ENCODE measurements at regions of chr1 and their contacts with region 1.

Region 1: GRCh38 chr1:166166695-166167571 is at the start of gene FAM78B:
- DNase-seq: peak; percentile 80 to 86 (median 84)
- ATAC-seq: peak; percentile 94 to 96 (median 96)
- H3K4me3 ChIP-seq: peak within 1 kb of the TSS; percentile 31 to 88 (median 68)
- H3K27ac ChIP-seq: peak within 1 kb of the TSS; percentile 47 to 88 (median 66)
- H3K4me1 ChIP-seq: peaks cover 0 to 28% (median 14%) of the 10 kb centered on the region in 12 donors
- H3K27me3 ChIP-seq: peaks cover 0 to 22% (median 0%) of the 10 kb centered on the region in 9 donors
- CTCF ChIP-seq: peak in 4 of 12 donors; percentile 2 to 34 (median 11)
- POLR2A ChIP-seq: no peak
- total RNA-seq, gene FAM78B: 1.3 to 9.4 (median 2.8) TPM

Region 2: DNA sequence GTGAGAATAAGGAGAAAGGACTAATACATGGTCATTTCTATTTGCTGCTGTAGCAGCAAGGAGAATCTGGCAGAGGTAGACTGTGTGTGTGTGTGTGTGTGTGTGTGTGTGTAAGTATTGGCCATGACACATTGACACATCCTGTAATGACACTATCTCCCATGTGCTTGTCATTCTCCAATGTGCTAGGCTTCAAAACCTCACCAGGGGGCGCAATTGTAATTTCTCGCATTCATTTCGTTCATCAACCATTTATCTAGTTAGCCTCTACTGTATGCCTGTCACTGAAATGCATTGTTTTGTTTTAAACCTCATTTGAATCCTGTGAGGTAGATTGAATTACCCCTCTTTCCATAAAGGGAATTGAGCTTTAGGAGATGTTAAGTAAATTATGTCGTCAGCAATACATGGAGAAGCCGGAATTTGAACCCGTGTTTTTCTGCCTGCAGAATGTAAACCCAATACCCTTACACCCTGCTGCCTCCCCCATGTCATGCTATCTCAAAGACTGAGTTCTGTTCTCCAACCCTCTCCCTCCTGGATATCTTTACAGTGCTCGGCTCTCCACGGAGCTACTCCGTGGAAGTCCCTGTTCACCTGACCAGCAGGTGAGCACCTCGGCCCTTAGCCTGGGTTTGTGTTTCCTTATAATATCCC is 238.7 kb before region 1 on chr1:
- intact Hi-C with region 1: loop called in 9 of 10 experiments (anchors 2 to 10 kb)
- DNase-seq: peak in 1 of 5 donors; percentile 38
- ATAC-seq: peak in 2 of 4 donors; percentile 11 to 47
- H3K4me3 ChIP-seq: no peak overlapping the region
- H3K27ac ChIP-seq: no peak overlapping the region
- H3K4me1 ChIP-seq: no peaks in the 10 kb centered on the region
- H3K27me3 ChIP-seq: peaks cover 0 to 4% (median 0%) of the 10 kb centered on the region in 9 donors
- CTCF ChIP-seq: peak; percentile 39 to 74 (median 62)
- POLR2A ChIP-seq: no peak

Region 3: GRCh38 chr1:165933446-165934178 is 233.3 kb before region 1 on chr1:
- intact Hi-C with region 1: loop called in 8 of 10 experiments (anchors 2 to 10 kb)
- DNase-seq: no peak
- ATAC-seq: no peak
- H3K4me3 ChIP-seq: no peak overlapping the region
- H3K27ac ChIP-seq: no peak overlapping the region
- H3K4me1 ChIP-seq: no peaks in the 10 kb centered on the region
- H3K27me3 ChIP-seq: peaks cover 0 to under 1% (median 0%) of the 10 kb centered on the region in 9 donors
- CTCF ChIP-seq: no peak
- POLR2A ChIP-seq: no peak

Region 4: GRCh38 chr1:166307261-166308188 is 140.6 kb after region 1 on chr1:
- intact Hi-C with region 1: loop called in 2 of 10 experiments (anchors 5 kb)
- DNase-seq: peak; percentile 56 to 81 (median 67)
- ATAC-seq: peak; percentile 96 to 98 (median 98)
- H3K4me3 ChIP-seq: peak overlapping the region in 2 of 12 donors; percentile 18 to 38
- H3K27ac ChIP-seq: peak overlapping the region; percentile 65 to 89 (median 81)
- H3K4me1 ChIP-seq: peaks cover 0 to 5% (median 0%) of the 10 kb centered on the region in 12 donors
- H3K27me3 ChIP-seq: no peaks in the 10 kb centered on the region
- CTCF ChIP-seq: no peak
- POLR2A ChIP-seq: no peak

Region 5: DNA sequence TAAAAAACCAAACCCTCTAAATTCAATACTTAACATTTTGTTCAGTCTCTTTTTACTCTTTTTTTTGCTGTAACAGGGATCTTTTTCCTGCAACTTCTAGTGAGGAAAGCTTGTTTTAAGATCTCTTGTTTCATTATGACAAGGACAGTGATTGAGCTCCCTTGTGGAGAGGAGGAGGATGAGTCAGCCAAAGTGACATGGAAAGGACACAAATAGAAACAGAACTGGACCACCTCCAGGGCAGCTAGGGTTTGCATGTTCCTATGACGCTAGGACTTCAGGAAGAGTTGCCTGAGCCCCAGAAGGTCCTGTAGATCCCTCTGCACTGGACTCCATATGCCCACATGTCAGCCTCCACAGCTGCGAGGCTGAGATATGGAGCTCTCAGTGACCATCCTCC is 212.5 kb after region 1 on chr1:
- intact Hi-C with region 1: loop called in 1 of 10 experiments (anchors 5 kb)
- DNase-seq: peak in 4 of 5 donors; percentile 66 to 74 (median 72)
- ATAC-seq: peak; percentile 91 to 98 (median 98)
- H3K4me3 ChIP-seq: no peak overlapping the region
- H3K27ac ChIP-seq: peak overlapping the region in 11 of 12 donors; percentile 9 to 75 (median 48)
- H3K4me1 ChIP-seq: peaks cover 0 to 11% (median 0%) of the 10 kb centered on the region in 12 donors
- H3K27me3 ChIP-seq: no peaks in the 10 kb centered on the region
- CTCF ChIP-seq: no peak
- POLR2A ChIP-seq: no peak

Region 6: GRCh38 chr1:166432655-166433054 is 265.7 kb after region 1 on chr1:
- intact Hi-C with region 1: loop called in 6 of 10 experiments (anchors 5 to 10 kb)
- DNase-seq: no peak
- ATAC-seq: no peak
- H3K4me3 ChIP-seq: no peak overlapping the region
- H3K27ac ChIP-seq: no peak overlapping the region
- H3K4me1 ChIP-seq: no peaks in the 10 kb centered on the region
- H3K27me3 ChIP-seq: peaks cover 0 to 9% (median 0%) of the 10 kb centered on the region in 9 donors
- CTCF ChIP-seq: no peak
- POLR2A ChIP-seq: no peak

Region 7: DNA sequence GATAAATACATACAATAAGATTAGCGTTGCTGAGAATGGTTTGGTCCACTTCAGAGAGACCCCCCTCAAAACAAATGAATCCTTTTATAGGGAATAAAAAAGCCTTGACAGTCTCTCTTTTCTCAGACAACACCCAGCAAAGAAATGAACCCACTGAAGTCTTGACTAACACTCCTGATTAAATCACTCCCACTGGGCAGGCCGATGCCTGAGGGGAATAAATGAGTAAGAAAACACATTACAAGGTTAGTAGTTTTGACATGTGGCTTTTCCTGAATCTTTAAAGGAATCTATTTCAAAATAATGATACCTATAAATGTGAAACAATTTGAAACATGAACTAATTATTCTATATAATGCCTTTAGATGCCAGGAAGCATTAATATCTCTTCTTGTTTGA is 525.4 kb after region 1 on chr1:
- intact Hi-C with region 1: no loop called
- DNase-seq: no peak
- ATAC-seq: no peak
- H3K4me3 ChIP-seq: no peak overlapping the region
- H3K27ac ChIP-seq: no peak overlapping the region
- H3K4me1 ChIP-seq: no peaks in the 10 kb centered on the region
- H3K27me3 ChIP-seq: peaks cover 0 to 4% (median 0%) of the 10 kb centered on the region in 9 donors
- CTCF ChIP-seq: no peak
- POLR2A ChIP-seq: no peak